ENCODE measurements at regions of chr11 and their contacts with region 1.

Region 1: DNA sequence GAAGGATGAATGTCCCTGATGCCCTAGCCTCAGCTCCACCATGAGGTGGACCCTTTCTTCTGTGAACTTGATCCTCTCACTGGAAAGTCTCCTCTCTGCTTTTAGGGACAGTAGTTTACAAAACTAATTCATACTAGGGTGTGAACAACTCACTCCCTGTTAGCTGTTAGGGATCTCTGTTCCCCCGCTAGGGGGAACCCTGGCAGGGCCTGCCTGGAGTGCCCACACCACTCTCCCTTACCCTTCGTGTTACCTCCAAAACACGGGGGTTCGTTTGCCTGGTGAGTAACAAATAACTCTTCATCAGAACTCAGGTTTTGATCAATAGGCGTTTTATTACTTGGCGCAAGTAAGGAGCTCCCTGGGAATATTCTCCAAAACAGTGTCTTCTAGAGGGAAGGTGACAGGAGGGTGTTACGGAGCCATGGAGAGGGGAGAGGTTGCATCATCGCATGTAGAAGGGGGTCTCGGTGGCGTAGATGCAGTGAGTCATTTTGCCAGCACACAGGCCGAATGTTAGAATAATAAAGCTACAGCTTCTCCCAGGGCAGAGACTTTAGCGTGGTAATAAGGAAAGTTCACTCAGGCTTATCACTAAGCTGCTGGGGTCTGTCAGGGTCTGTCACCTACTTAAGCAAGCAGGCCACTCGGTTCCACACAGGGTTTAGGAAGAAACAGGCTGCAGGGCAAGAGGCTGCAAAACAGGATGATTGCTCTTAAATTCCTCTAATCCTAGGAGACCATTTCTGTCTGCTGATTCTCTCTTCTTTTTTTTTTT is 45.8 kb downstream of the C11orf96 start:
- DNase-seq: no peak
- H3K4me3 ChIP-seq: no peak overlapping the region
- H3K27ac ChIP-seq: no peak overlapping the region
- H3K4me1 ChIP-seq: no peaks in the 10 kb centered on the region
- H3K27me3 ChIP-seq: peaks cover 80% of the 10 kb centered on the region
- CTCF ChIP-seq: peak; percentile 37; the same call in 1 of the 2 replicates

Region 2: GRCh38 chr11:43895601-43896000 is 92.6 kb before region 1 on chr11:
- CTCF ChIA-PET with region 1: no interaction called
- POLR2A ChIA-PET with region 1: no interaction called
- intact Hi-C with region 1: no loop called
- DNase-seq: no peak
- H3K4me3 ChIP-seq: no peak overlapping the region
- H3K27ac ChIP-seq: no peak overlapping the region
- H3K4me1 ChIP-seq: peaks cover 13% of the 10 kb centered on the region
- H3K27me3 ChIP-seq: no peaks in the 10 kb centered on the region
- CTCF ChIP-seq: no peak

Region 3: GRCh38 chr11:43937434-43938411 is 50.5 kb before region 1 on chr11:
- CTCF ChIA-PET with region 1: no interaction called
- POLR2A ChIA-PET with region 1: interaction called, 11 read pairs
- intact Hi-C with region 1: no loop called
- DNase-seq: peak; percentile 44 to 65
- H3K4me3 ChIP-seq: no peak overlapping the region
- H3K27ac ChIP-seq: no peak overlapping the region
- H3K4me1 ChIP-seq: peaks cover 12% of the 10 kb centered on the region
- H3K27me3 ChIP-seq: peaks cover 18% of the 10 kb centered on the region
- CTCF ChIP-seq: peak; percentile 23; the same call in 1 of the 2 replicates

Region 4: GRCh38 chr11:44673688-44674087 is 685.5 kb after region 1 on chr11:
- CTCF ChIA-PET with region 1: no interaction called
- POLR2A ChIA-PET with region 1: no interaction called
- intact Hi-C with region 1: no loop called
- DNase-seq: no peak
- H3K4me3 ChIP-seq: no peak overlapping the region
- H3K27ac ChIP-seq: no peak overlapping the region
- H3K4me1 ChIP-seq: no peaks in the 10 kb centered on the region
- H3K27me3 ChIP-seq: no peaks in the 10 kb centered on the region
- CTCF ChIP-seq: no peak

Region 5: DNA sequence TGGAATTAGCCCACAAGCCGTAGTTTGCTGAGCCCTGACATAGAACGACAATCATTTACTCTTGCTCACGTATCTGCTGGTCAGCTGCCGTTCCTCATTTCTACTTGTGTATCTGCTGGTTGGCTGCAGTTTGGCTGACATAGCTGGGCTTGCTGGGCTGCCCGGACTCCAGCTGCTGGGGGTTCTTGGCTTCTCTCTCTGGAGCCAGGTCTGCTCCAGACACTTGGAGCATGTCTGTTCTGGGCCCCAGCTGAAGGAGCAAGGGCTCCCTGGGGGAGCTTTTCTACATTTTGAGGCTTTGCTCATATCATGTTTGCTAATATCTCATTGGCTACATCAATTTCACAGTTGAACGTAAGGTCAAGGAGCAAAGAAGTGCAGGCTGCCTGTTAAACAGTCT is 1205.5 kb after region 1 on chr11:
- CTCF ChIA-PET with region 1: no interaction called
- POLR2A ChIA-PET with region 1: no interaction called
- intact Hi-C with region 1: no loop called
- DNase-seq: no peak
- H3K4me3 ChIP-seq: no peak overlapping the region
- H3K27ac ChIP-seq: no peak overlapping the region
- H3K4me1 ChIP-seq: no peaks in the 10 kb centered on the region
- H3K27me3 ChIP-seq: peaks cover 15% of the 10 kb centered on the region
- CTCF ChIP-seq: no peak

Measured in PC-9 (cell line).